Activated T-helper 2 cell treated with anti-CD3 and anti-CD28 coated beads, Interferon-gamma antibody, Interleukin-2, Interleukin-4, amounts not matched to agents 10 μg/mL and 5 μg/mL and 100 μg/mL, durations not matched to agents 14 hours and 24 hours and 36 hours (primary cell): ENCODE measurements at regions of chr12 and their contacts with region 1.

Region 1: GRCh38 chr12:810671-811415 is 58.5 kb downstream of the WNK1 start:
- DNase-seq: no peak
- H3K4me3 Mint-ChIP-seq: no peak overlapping the region
- H3K27ac Mint-ChIP-seq: peak overlapping the region; percentile 18
- H3K4me1 Mint-ChIP-seq: peaks cover 55% of the 10 kb centered on the region
- H3K27me3 Mint-ChIP-seq: no peaks in the 10 kb centered on the region

Region 2: GRCh38 chr12:575948-576612 is 234.8 kb before region 1 on chr12:
- intact Hi-C with region 1: loop called (anchors 1 kb)
- DNase-seq: peak; percentile 80
- H3K4me3 Mint-ChIP-seq: no peak overlapping the region
- H3K27ac Mint-ChIP-seq: peak overlapping the region; percentile 74
- H3K4me1 Mint-ChIP-seq: peaks cover 25% of the 10 kb centered on the region
- H3K27me3 Mint-ChIP-seq: peaks cover 3% of the 10 kb centered on the region

Region 3: GRCh38 chr12:611721-612120 is 199.1 kb before region 1 on chr12:
- intact Hi-C with region 1: loop called (anchors 2 kb)
- DNase-seq: no peak
- H3K4me3 Mint-ChIP-seq: no peak overlapping the region
- H3K27ac Mint-ChIP-seq: no peak overlapping the region
- H3K4me1 Mint-ChIP-seq: peaks cover 33% of the 10 kb centered on the region
- H3K27me3 Mint-ChIP-seq: no peaks in the 10 kb centered on the region

Region 4: GRCh38 chr12:662566-663292 is 148.1 kb before region 1 on chr12:
- intact Hi-C with region 1: no loop called
- DNase-seq: no peak
- H3K4me3 Mint-ChIP-seq: peak overlapping the region; percentile 49
- H3K27ac Mint-ChIP-seq: peak overlapping the region; percentile 68
- H3K4me1 Mint-ChIP-seq: peaks cover 35% of the 10 kb centered on the region
- H3K27me3 Mint-ChIP-seq: peaks cover 5% of the 10 kb centered on the region

Region 5: DNA sequence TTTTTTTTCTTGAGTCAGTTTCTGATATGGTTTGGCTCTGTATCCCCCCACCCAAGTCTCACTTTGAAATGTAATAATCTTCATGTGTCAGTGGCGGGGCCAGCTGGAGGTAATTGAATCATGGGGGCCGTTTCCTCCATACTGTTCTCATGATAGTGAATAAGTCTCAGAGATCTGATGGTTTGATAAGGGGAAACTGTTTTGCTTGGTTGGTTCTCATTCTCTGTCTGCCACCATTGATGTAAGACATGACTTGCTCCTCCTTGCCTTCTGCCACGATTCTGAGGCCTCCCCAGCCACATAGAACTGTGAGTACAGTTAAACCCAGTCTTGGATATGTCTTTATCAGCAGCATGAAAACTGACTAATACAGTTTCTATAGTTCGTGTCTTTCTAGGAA is 15.5 kb before region 1 on chr12:
- intact Hi-C with region 1: loop called (anchors 2 kb)
- DNase-seq: peak; percentile 51
- H3K4me3 Mint-ChIP-seq: peak overlapping the region; percentile 48
- H3K27ac Mint-ChIP-seq: peak overlapping the region; percentile 94
- H3K4me1 Mint-ChIP-seq: peaks cover 58% of the 10 kb centered on the region
- H3K27me3 Mint-ChIP-seq: no peaks in the 10 kb centered on the region

Region 6: DNA sequence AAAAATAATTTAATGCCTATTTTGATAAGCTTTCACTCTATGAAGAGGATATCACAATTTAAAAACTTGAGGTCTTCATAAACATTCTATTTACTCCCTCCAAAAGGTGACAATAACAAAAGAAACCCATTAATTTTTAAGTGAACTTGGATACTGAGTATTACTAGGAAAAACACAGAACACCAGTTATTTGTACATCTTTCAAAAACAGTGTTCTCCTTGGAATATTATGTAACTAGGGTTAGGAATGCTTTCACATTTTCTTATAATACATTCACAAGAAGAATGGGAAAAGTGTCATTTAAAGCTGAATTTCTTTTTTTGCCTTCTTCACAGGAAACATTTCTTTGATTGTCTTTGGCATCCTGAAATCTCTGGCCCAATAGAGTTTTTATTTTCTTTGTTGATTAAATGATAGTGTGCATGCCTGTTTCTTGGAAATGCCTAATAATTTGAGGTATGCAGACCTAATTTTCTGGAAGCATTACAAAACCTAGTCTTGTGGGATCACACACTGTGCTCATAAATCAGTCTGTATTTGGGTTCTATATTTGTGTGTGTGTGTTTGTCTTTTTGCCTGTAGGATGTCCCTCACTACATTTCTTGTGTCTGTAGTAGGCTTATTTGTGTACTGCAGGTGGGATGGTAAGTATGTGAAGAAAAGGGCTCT is 18.0 kb after region 1 on chr12:
- intact Hi-C with region 1: no loop called
- DNase-seq: no peak
- H3K4me3 Mint-ChIP-seq: no peak overlapping the region
- H3K27ac Mint-ChIP-seq: no peak overlapping the region
- H3K4me1 Mint-ChIP-seq: peaks cover 22% of the 10 kb centered on the region
- H3K27me3 Mint-ChIP-seq: no peaks in the 10 kb centered on the region

Region 7: DNA sequence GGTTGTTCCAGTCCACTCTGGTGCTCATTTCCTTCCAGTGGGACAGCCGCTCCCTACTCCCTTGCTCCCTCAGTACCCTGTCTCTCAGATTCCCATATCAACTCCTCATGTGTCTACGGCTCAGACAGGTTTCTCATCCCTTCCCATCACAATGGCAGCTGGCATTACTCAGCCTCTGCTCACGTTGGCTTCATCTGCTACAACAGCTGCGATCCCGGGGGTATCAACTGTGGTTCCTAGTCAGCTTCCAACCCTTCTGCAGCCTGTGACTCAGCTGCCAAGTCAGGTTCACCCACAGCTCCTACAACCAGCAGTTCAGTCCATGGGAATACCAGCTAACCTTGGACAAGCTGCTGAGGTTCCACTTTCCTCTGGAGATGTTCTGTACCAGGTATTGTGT is 68.8 kb after region 1 on chr12:
- intact Hi-C with region 1: loop called (anchors 10 kb)
- DNase-seq: no peak
- H3K4me3 Mint-ChIP-seq: no peak overlapping the region
- H3K27ac Mint-ChIP-seq: no peak overlapping the region
- H3K4me1 Mint-ChIP-seq: no peaks in the 10 kb centered on the region
- H3K27me3 Mint-ChIP-seq: no peaks in the 10 kb centered on the region

Region 8: GRCh38 chr12:1328391-1328790 is 517.5 kb after region 1 on chr12:
- intact Hi-C with region 1: no loop called
- DNase-seq: no peak
- H3K4me3 Mint-ChIP-seq: no peak overlapping the region
- H3K27ac Mint-ChIP-seq: no peak overlapping the region
- H3K4me1 Mint-ChIP-seq: peaks cover 7% of the 10 kb centered on the region
- H3K27me3 Mint-ChIP-seq: no peaks in the 10 kb centered on the region